Natural killer cell (primary cell): ENCODE measurements at regions of chr5 and their contacts with region 1.

Region 1: GRCh38 chr5:135944967-135945560 is 9.7 kb downstream of the LECT2 start:
- DNase-seq: peak in 1 of 2 donors; percentile 69
- ATAC-seq: no peak
- H3K4me3 ChIP-seq: no peak overlapping the region
- H3K4me3 Mint-ChIP-seq: no peak overlapping the region
- H3K27ac ChIP-seq: no peak overlapping the region
- H3K27ac Mint-ChIP-seq: no peak overlapping the region
- H3K4me1 ChIP-seq: no peaks in the 10 kb centered on the region
- H3K4me1 Mint-ChIP-seq: no peaks in the 10 kb centered on the region
- H3K27me3 ChIP-seq: no peaks in the 10 kb centered on the region
- H3K27me3 Mint-ChIP-seq: peaks cover 8 to 35% of the 10 kb centered on the region in 2 donors
- CTCF ChIP-seq: peak; percentile 70

Region 2: DNA sequence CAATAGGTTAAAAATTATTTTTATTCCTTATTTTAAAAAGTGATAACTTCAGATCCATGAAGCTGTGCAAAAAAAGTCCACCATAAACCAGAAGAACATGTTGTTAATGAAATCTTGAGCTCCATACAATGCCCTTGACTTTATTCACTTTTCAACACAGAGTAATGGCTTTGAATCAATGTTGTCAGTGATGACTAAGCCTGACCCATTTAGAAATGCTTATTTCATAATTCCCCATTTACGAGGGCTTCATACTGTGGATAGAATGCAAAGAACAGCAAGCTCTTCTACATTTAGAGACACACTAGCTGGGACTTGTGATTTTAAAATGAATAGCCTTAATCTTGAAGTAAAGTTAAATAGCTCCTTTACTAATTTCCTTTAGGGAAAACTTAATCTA is 23.7 kb before region 1 on chr5:
- intact Hi-C with region 1: no loop called
- DNase-seq: no peak
- ATAC-seq: no peak
- H3K4me3 ChIP-seq: no peak overlapping the region
- H3K4me3 Mint-ChIP-seq: no peak overlapping the region
- H3K27ac ChIP-seq: no peak overlapping the region
- H3K27ac Mint-ChIP-seq: no peak overlapping the region
- H3K4me1 ChIP-seq: peaks cover 1% of the 10 kb centered on the region
- H3K4me1 Mint-ChIP-seq: peaks cover 13 to 20% of the 10 kb centered on the region in 2 donors
- H3K27me3 ChIP-seq: peaks cover 24% of the 10 kb centered on the region
- H3K27me3 Mint-ChIP-seq: peaks cover 34 to 54% of the 10 kb centered on the region in 2 donors
- CTCF ChIP-seq: no peak

Region 3: GRCh38 chr5:136062366-136063274 is 117.6 kb after region 1 on chr5:
- intact Hi-C with region 1: loop called (anchors 1 kb)
- DNase-seq: peak in 1 of 2 donors; percentile 56
- ATAC-seq: peak in 2 of 3 donors; percentile 38 to 61
- H3K4me3 ChIP-seq: no peak overlapping the region
- H3K4me3 Mint-ChIP-seq: no peak overlapping the region
- H3K27ac ChIP-seq: no peak overlapping the region
- H3K27ac Mint-ChIP-seq: no peak overlapping the region
- H3K4me1 ChIP-seq: no peaks in the 10 kb centered on the region
- H3K4me1 Mint-ChIP-seq: no peaks in the 10 kb centered on the region
- H3K27me3 ChIP-seq: no peaks in the 10 kb centered on the region
- H3K27me3 Mint-ChIP-seq: peaks cover 3 to 5% of the 10 kb centered on the region in 2 donors
- CTCF ChIP-seq: no peak

Region 4: GRCh38 chr5:136080483-136081216 is 135.6 kb after region 1 on chr5:
- intact Hi-C with region 1: loop called (anchors 1 kb)
- DNase-seq: peak; percentile 47 to 69
- ATAC-seq: peak; percentile 77 to 96 (median 92)
- H3K4me3 ChIP-seq: peak overlapping the region; percentile 2
- H3K4me3 Mint-ChIP-seq: peak overlapping the region; percentile 67
- H3K27ac ChIP-seq: no peak overlapping the region
- H3K27ac Mint-ChIP-seq: peak overlapping the region in 1 of 2 donors; percentile 59
- H3K4me1 ChIP-seq: peaks cover 16% of the 10 kb centered on the region
- H3K4me1 Mint-ChIP-seq: peaks cover 0 to 12% of the 10 kb centered on the region in 2 donors
- H3K27me3 ChIP-seq: peaks cover 7% of the 10 kb centered on the region
- H3K27me3 Mint-ChIP-seq: peaks cover 32 to 39% of the 10 kb centered on the region in 2 donors
- CTCF ChIP-seq: no peak

Region 5: GRCh38 chr5:136212252-136212721 is 267.2 kb after region 1 on chr5:
- intact Hi-C with region 1: loop called (anchors 5 kb)
- DNase-seq: peak; percentile 38 to 65
- ATAC-seq: peak in 1 of 3 donors; percentile 58
- H3K4me3 ChIP-seq: no peak overlapping the region
- H3K4me3 Mint-ChIP-seq: no peak overlapping the region
- H3K27ac ChIP-seq: no peak overlapping the region
- H3K27ac Mint-ChIP-seq: no peak overlapping the region
- H3K4me1 ChIP-seq: no peaks in the 10 kb centered on the region
- H3K4me1 Mint-ChIP-seq: no peaks in the 10 kb centered on the region
- H3K27me3 ChIP-seq: no peaks in the 10 kb centered on the region
- H3K27me3 Mint-ChIP-seq: peaks cover 4 to 6% of the 10 kb centered on the region in 2 donors
- CTCF ChIP-seq: peak; percentile 85